ENCODE measurements at regions of chr6 and their contacts with region 1.

Region 1: DNA sequence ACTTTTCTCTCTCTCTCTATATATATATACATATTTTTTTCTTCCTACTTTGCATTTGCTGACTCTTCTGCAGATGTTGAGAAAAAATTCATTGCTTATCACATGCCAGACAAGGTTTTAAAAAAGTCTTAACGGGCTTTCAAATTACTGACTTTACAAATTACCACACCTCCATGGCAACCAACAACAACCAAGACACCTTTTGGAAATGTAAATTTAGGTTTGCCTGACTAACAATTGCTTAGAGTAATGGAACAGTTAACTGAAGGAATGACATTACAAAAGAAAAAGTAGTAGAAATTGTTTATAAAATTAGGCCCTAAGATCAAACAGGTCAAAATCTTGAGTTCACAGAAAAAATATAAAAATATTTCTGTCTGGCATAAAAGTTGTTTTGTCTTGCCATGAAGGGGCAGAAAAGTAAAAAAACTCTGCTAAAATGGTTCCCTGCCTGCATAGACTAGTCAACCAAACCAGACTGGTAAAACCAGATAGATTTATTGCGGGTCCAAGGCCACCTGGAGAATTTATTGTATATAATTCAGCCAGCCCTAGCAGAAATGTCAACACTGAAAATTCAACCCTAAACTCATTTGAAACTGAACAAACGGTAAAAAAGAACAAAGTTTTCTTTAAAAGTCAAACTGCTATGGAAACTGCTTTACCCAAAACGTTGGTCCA is 92.8 kb upstream of the FRMD1 start:
- DNase-seq: no peak
- ATAC-seq: no peak
- H3K4me3 ChIP-seq: no peak overlapping the region
- H3K4me3 Mint-ChIP-seq: no peak overlapping the region
- H3K27ac ChIP-seq: no peak overlapping the region
- H3K27ac Mint-ChIP-seq: no peak overlapping the region
- H3K4me1 ChIP-seq: peaks cover 5% of the 10 kb centered on the region
- H3K4me1 Mint-ChIP-seq: no peaks in the 10 kb centered on the region
- H3K27me3 ChIP-seq: no peaks in the 10 kb centered on the region
- H3K27me3 Mint-ChIP-seq: peaks cover 23% of the 10 kb centered on the region
- CTCF ChIP-seq: no peak

Region 2: GRCh38 chr6:167733740-167734661 is 437.8 kb before region 1 on chr6:
- CTCF ChIA-PET with region 1: no interaction called
- POLR2A ChIA-PET with region 1: no interaction called
- intact Hi-C with region 1: no loop called
- DNase-seq: no peak
- ATAC-seq: no peak
- H3K4me3 ChIP-seq: no peak overlapping the region
- H3K4me3 Mint-ChIP-seq: no peak overlapping the region
- H3K27ac ChIP-seq: no peak overlapping the region
- H3K27ac Mint-ChIP-seq: no peak overlapping the region
- H3K4me1 ChIP-seq: no peaks in the 10 kb centered on the region
- H3K4me1 Mint-ChIP-seq: no peaks in the 10 kb centered on the region
- H3K27me3 ChIP-seq: peaks cover 0 to 6% of the 10 kb centered on the region in 2 experiments
- H3K27me3 Mint-ChIP-seq: peaks cover 10% of the 10 kb centered on the region
- CTCF ChIP-seq: no peak

Region 3: GRCh38 chr6:168071336-168072019 is 100.3 kb before region 1 on chr6:
- CTCF ChIA-PET with region 1: no interaction called
- POLR2A ChIA-PET with region 1: no interaction called
- intact Hi-C with region 1: no loop called
- DNase-seq: no peak
- ATAC-seq: no peak
- H3K4me3 ChIP-seq: no peak overlapping the region
- H3K4me3 Mint-ChIP-seq: no peak overlapping the region
- H3K27ac ChIP-seq: no peak overlapping the region
- H3K27ac Mint-ChIP-seq: no peak overlapping the region
- H3K4me1 ChIP-seq: no peaks in the 10 kb centered on the region
- H3K4me1 Mint-ChIP-seq: no peaks in the 10 kb centered on the region
- H3K27me3 ChIP-seq: no peaks in the 10 kb centered on the region
- H3K27me3 Mint-ChIP-seq: peaks cover 7% of the 10 kb centered on the region
- CTCF ChIP-seq: no peak

Region 4: GRCh38 chr6:168150551-168151320 is 21.1 kb before region 1 on chr6:
- CTCF ChIA-PET with region 1: no interaction called
- POLR2A ChIA-PET with region 1: no interaction called
- intact Hi-C with region 1: no loop called
- DNase-seq: no peak
- ATAC-seq: no peak
- H3K4me3 ChIP-seq: no peak overlapping the region
- H3K4me3 Mint-ChIP-seq: no peak overlapping the region
- H3K27ac ChIP-seq: no peak overlapping the region
- H3K27ac Mint-ChIP-seq: no peak overlapping the region
- H3K4me1 ChIP-seq: no peaks in the 10 kb centered on the region
- H3K4me1 Mint-ChIP-seq: no peaks in the 10 kb centered on the region
- H3K27me3 ChIP-seq: peaks cover 0 to 3% of the 10 kb centered on the region in 2 experiments
- H3K27me3 Mint-ChIP-seq: peaks cover 31% of the 10 kb centered on the region
- CTCF ChIP-seq: no peak

Region 5: DNA sequence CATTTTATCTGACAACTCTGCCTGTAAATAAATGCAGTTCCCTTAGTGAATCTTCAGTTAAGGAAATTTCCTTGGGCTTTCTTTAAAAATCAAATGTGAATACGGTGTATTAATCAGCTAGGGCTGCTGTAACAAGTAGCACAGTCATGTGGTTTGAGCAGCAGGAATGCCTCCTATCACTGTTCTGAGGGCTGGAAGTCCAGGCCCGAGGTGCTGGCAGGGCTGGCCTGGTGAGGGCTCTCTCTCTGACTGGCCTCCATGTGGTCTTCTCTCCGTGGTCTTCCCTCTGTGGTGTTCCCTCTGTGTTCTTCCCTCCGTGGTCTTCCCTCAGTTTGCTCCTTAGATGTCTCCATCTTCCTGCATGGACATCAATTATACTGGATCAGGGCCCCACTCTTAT is 393.3 kb after region 1 on chr6:
- CTCF ChIA-PET with region 1: no interaction called
- POLR2A ChIA-PET with region 1: no interaction called
- intact Hi-C with region 1: loop called in 1 of 2 experiments (anchors 5 kb)
- DNase-seq: no peak
- ATAC-seq: no peak
- H3K4me3 ChIP-seq: no peak overlapping the region
- H3K4me3 Mint-ChIP-seq: no peak overlapping the region
- H3K27ac ChIP-seq: no peak overlapping the region
- H3K27ac Mint-ChIP-seq: no peak overlapping the region
- H3K4me1 ChIP-seq: no peaks in the 10 kb centered on the region
- H3K4me1 Mint-ChIP-seq: no peaks in the 10 kb centered on the region
- H3K27me3 ChIP-seq: no peaks in the 10 kb centered on the region
- H3K27me3 Mint-ChIP-seq: peaks cover 12% of the 10 kb centered on the region
- CTCF ChIP-seq: no peak

Measured in CD4-positive, alpha-beta T cell (primary cell).